ENCODE measurements at regions of chr15 and their contacts with region 1.

Region 1: GRCh38 chr15:94335616-94336015 is 104.3 kb downstream of the MCTP2 start:
- DNase-seq: no peak
- H3K4me3 Mint-ChIP-seq: no peak overlapping the region
- H3K27ac Mint-ChIP-seq: no peak overlapping the region
- H3K4me1 Mint-ChIP-seq: no peaks in the 10 kb centered on the region
- H3K27me3 Mint-ChIP-seq: no peaks in the 10 kb centered on the region

Region 2: DNA sequence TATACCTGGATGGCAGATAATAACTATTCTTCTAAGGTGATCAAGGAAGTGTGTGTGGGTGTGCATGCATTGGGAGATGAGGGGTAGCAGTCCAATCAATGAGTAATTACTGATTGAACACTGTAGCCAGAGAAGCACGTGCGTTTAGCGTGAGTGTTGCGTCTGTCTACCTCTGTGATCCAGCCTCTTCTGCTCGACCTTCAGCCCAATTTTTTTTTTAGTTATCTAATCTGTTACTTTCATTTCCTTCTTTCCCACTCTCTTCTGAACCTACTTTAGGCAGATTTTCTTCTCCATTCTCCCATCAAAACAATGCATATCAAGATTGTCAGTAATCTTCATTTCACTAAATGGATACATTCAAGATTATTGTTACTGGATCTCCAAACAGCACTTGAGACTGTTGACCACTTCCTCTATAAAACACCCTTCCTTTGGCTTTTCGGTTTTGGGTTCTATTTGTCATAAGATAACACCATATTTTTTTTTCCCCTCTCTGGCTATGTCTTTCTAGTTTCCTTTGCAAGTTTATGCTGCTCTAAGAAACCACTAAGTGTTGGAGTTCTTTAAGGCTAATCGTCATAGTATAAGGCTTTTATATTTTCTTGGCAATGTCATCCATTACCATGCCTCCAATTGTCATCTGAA is 63.2 kb before region 1 on chr15:
- CTCF ChIA-PET with region 1: no interaction called
- intact Hi-C with region 1: no loop called
- DNase-seq: no peak
- H3K4me3 Mint-ChIP-seq: no peak overlapping the region
- H3K27ac Mint-ChIP-seq: no peak overlapping the region
- H3K4me1 Mint-ChIP-seq: peaks cover 18% of the 10 kb centered on the region
- H3K27me3 Mint-ChIP-seq: no peaks in the 10 kb centered on the region

Region 3: GRCh38 chr15:94383706-94384105 is 48.1 kb after region 1 on chr15:
- CTCF ChIA-PET with region 1: no interaction called
- intact Hi-C with region 1: no loop called
- DNase-seq: no peak
- H3K4me3 Mint-ChIP-seq: no peak overlapping the region
- H3K27ac Mint-ChIP-seq: no peak overlapping the region
- H3K4me1 Mint-ChIP-seq: peaks cover 11% of the 10 kb centered on the region
- H3K27me3 Mint-ChIP-seq: no peaks in the 10 kb centered on the region

Region 4: DNA sequence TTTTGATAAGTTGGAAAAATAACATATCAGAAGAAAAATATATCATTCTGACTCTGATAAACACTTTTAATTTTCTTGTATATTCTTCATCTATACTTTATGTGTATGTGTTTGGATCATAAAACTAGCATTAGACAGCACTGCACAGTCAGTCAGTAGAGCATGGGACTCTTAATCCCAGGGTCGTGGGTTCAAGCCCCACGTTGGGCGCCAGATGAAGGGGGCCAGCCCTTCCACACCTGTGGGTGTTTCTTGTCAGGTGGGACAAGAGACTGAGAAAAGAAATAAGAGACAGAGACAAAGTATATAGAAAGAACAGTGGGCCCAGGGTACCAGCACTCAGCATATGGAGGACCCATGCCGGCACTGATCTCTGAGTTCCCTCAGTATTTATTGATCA is 1448.9 kb after region 1 on chr15:
- CTCF ChIA-PET with region 1: no interaction called
- intact Hi-C with region 1: loop called (anchors 10 kb)
- DNase-seq: no peak
- H3K4me3 Mint-ChIP-seq: no peak overlapping the region
- H3K27ac Mint-ChIP-seq: no peak overlapping the region
- H3K4me1 Mint-ChIP-seq: no peaks in the 10 kb centered on the region
- H3K27me3 Mint-ChIP-seq: peaks cover 4% of the 10 kb centered on the region

Measured in activated naive CD4-positive, alpha-beta T cell treated with anti-CD3 and anti-CD28 coated beads for 36 hours (primary cell).